Heart left ventricle (tissue), 16 donors: ENCODE measurements at regions of chr21 and their contacts with region 1.

Region 1: GRCh38 chr21:34073032-34073869 is at the starts of genes MRPS6 and SLC5A3:
- DNase-seq: peak; percentile 86 to 92 (median 89)
- ATAC-seq: peak; percentile 78 to 94 (median 89)
- H3K4me3 ChIP-seq: peak within 1 kb of the TSS; percentile 49 to 93 (median 82)
- H3K27ac ChIP-seq: peak within 1 kb of the TSS; percentile 20 to 91 (median 86)
- H3K4me1 ChIP-seq: peaks cover 0 to 45% (median 29%) of the 10 kb centered on the region in 12 donors
- H3K27me3 ChIP-seq: no peaks in the 10 kb centered on the region
- CTCF ChIP-seq: peak in 1 of 12 donors; percentile 18
- POLR2A ChIP-seq: peak in 1 of 2 donors; percentile 96
- total RNA-seq, gene MRPS6: 21.8 to 59.8 (median 35.6) TPM
- total RNA-seq, gene SLC5A3: 2.4 to 6.2 (median 3.6) TPM

Region 2: DNA sequence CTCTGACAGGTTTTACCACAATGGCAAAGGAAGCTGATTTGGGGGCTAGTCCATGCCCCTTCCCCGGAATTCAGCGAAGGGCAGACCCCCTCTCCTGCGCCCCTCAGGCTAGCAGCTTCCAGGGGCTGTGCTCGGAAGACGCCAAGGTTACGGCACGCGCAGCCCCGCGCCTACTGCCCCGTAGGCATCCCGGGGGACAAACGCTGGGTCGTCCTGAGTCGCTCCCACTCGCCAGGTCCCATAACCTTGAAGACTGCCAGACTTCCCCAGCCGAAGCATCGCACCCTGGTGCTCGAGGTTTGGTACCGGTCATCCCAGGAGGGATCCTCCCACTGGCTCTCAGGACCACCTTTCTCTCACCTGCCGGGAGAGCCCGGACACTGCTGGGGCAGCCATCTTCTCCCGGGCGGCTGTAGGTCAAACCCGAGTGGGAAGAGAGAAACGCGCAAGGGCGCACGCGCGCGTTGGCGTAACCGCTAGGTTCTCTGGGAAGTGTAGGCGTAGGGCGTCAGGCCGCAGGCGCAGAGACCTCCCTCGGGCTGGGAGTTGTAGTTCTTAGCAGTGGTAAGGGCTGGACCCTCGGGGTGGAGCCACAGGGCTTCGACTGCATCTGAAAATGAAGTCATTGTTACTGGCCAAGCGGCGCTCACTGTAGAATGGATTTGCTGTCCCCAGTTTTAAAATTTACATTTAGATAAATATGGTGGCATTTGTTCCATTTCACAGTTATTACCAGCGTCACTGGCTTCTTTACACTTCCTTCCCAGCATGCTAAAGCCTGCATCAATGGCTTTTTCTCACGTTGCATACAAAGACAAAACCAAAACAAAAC is 157.7 kb before region 1 on chr21 and contains the start of gene ATP5PO:
- intact Hi-C with region 1: loop called in 5 of 10 experiments (anchors 5 to 10 kb)
- DNase-seq: peak; percentile 97 to 99 (median 99)
- ATAC-seq: peak; percentile 99 to 100 (median 100)
- H3K4me3 ChIP-seq: peak within 1 kb of the TSS; percentile 63 to 98 (median 90)
- H3K27ac ChIP-seq: peak within 1 kb of the TSS; percentile 77 to 99 (median 93)
- H3K4me1 ChIP-seq: peaks cover 0 to 40% (median 22%) of the 10 kb centered on the region in 12 donors
- H3K27me3 ChIP-seq: no peaks in the 10 kb centered on the region
- CTCF ChIP-seq: peak in 1 of 12 donors; percentile 6
- POLR2A ChIP-seq: peak; percentile 44 to 92
- total RNA-seq, gene ATP5PO: 472 to 1,228 (median 735) TPM

Region 3: DNA sequence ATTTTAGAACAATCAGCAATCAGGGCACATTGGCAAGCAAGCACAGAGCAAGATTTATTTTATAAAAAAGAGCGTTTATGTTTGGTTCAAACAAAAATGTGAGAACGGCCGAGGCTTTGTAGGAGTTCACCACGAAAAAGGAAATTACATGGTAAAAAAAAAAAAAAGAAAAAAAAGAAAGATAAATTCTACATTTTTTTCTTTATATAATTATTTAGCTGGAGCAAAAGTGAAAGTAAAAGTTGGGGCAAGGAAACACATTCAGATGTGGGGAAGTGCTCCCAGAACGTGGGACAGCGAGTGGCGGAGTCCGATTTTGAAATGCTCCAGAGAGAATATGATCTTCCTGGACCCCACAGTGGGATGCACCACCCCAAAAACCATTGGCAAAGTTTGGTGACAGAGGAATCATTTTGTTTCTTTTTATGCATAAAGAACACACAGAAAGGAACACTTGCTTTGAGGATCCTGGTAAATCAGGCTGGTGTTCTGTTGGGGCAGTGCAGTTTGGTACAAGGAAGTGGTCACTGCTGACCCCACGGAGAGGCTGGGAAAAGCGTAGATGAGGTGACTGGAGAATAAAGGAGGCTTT is 141.4 kb before region 1 on chr21:
- intact Hi-C with region 1: loop called in 3 of 10 experiments (anchors 10 kb)
- DNase-seq: no peak
- ATAC-seq: peak in 3 of 4 donors; percentile 50 to 61 (median 58)
- H3K4me3 ChIP-seq: peak overlapping the region in 11 of 12 donors; percentile 14 to 59 (median 44)
- H3K27ac ChIP-seq: peak overlapping the region in 9 of 12 donors; percentile 0 to 88 (median 44)
- H3K4me1 ChIP-seq: peaks cover 0 to 27% (median 7%) of the 10 kb centered on the region in 12 donors
- H3K27me3 ChIP-seq: no peaks in the 10 kb centered on the region
- CTCF ChIP-seq: no peak
- POLR2A ChIP-seq: no peak

Region 4: GRCh38 chr21:33976082-33977016 is 96.9 kb before region 1 on chr21:
- intact Hi-C with region 1: loop called in 2 of 10 experiments (anchors 5 kb)
- DNase-seq: peak in 4 of 5 donors; percentile 26 to 67 (median 53)
- ATAC-seq: peak; percentile 48 to 90 (median 84)
- H3K4me3 ChIP-seq: peak overlapping the region in 7 of 12 donors; percentile 13 to 35 (median 26)
- H3K27ac ChIP-seq: peak overlapping the region; percentile 48 to 91 (median 74)
- H3K4me1 ChIP-seq: peaks cover 0 to 48% (median 16%) of the 10 kb centered on the region in 12 donors
- H3K27me3 ChIP-seq: no peaks in the 10 kb centered on the region
- CTCF ChIP-seq: no peak
- POLR2A ChIP-seq: no peak

Region 5: DNA sequence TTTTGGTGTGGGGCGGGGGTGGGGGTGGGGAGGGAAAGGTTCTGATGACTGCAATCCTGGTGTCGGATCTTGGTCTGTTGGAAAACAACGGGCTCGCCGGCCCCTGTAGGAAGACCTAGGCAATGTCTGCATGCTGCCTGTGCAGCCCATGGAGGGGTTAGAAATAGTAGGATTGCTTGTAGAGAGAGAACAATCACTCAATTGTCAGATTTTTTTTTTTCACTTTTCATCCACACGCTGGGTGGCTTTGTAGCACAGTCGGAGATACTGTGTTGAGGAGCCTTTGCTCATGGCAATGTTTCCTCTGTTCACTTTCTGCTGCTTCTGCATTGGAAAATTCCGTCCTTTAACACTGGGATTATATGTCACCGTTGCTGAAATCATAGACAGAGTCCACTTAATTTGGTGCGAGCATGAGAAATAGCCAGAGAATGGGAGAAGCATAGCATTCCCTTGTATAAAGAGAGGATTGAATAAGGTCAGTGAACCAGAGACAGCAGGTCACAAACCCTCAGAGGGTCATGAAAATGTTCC is 107.6 kb after region 1 on chr21:
- intact Hi-C with region 1: loop called in 1 of 10 experiments (anchors 5 kb)
- DNase-seq: no peak
- ATAC-seq: peak in 1 of 4 donors; percentile 42
- H3K4me3 ChIP-seq: peak overlapping the region in 7 of 12 donors; percentile 18 to 42 (median 31)
- H3K27ac ChIP-seq: peak overlapping the region in 10 of 12 donors; percentile 8 to 53 (median 25)
- H3K4me1 ChIP-seq: peaks cover 0 to 5% (median 0%) of the 10 kb centered on the region in 12 donors
- H3K27me3 ChIP-seq: no peaks in the 10 kb centered on the region
- CTCF ChIP-seq: no peak
- POLR2A ChIP-seq: no peak

Region 6: GRCh38 chr21:34345091-34345871 is 272.0 kb after region 1 on chr21:
- intact Hi-C with region 1: loop called in 8 of 10 experiments (anchors 2 to 5 kb)
- DNase-seq: peak in 4 of 5 donors; percentile 45 to 49 (median 47)
- ATAC-seq: peak in 3 of 4 donors; percentile 32 to 53 (median 46)
- H3K4me3 ChIP-seq: no peak overlapping the region
- H3K27ac ChIP-seq: peak overlapping the region in 7 of 12 donors; percentile 13 to 73 (median 60)
- H3K4me1 ChIP-seq: peaks cover 0 to 43% (median 14%) of the 10 kb centered on the region in 12 donors
- H3K27me3 ChIP-seq: no peaks in the 10 kb centered on the region
- CTCF ChIP-seq: no peak
- POLR2A ChIP-seq: no peak